ENCODE measurements at regions of chr6 and their contacts with region 1.

Region 1: GRCh38 chr6:127554435-127555006 is 22.5 kb upstream of the C6orf58 start:
- DNase-seq: no peak
- H3K4me3 ChIP-seq: no peak overlapping the region
- CTCF ChIP-seq: peak; percentile 48

Region 2: DNA sequence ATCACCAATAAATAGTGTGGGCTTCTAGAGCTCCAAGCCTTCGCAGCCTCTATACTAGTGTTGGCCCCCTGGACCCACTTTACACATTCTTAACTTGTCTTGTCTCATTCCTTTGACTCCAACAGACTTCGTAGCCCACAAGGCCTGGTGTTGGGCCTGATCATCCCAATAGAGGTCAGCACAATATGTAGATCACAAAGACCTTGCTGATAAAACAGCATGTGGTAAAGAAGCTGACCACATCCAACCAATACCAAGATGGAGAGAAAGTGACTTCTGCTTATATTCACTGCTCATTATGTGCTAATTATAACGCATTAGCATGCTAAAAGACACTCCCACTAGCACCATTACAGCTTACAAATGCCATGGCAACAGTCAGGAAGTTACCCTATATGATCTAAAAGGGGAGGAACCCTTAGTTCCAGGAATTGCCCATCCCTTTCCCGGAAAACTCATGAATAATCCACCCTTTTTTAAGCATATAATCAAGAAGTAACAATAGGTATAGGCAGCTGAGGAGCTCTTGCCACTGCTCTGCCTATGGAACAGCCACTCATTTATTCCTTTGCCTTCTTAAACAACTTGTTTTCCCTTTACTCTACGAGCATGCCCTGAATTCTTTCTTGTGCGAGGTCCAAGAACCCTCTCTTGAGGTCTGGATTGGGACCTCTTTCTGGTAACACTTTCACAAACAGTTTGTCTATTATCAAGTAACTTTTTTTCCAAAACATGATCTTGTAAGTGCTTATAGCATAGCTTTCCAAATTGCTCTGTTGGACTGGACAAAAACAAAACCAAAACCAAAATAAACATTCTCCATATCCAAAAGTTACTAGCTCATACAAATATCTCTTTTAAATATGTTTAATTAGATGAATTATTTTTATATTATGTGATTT is 156.5 kb before region 1 on chr6:
- CTCF ChIA-PET with region 1: no interaction called
- POLR2A ChIA-PET with region 1: no interaction called
- DNase-seq: no peak
- H3K4me3 ChIP-seq: no peak overlapping the region
- CTCF ChIP-seq: no peak

Region 3: GRCh38 chr6:127641905-127642304 is 87.4 kb after region 1 on chr6:
- CTCF ChIA-PET with region 1: interaction called, 28 read pairs
- POLR2A ChIA-PET with region 1: no interaction called
- DNase-seq: no peak
- H3K4me3 ChIP-seq: no peak overlapping the region
- CTCF ChIP-seq: peak; percentile 62

Measured in AG04449 (cell line).